ENCODE measurements at regions of chr7 and their contacts with region 1.

Region 1: GRCh38 chr7:27739909-27740448 is at the start of gene TAX1BP1:
- DNase-seq: peak; percentile 74 to 97
- H3K4me3 ChIP-seq: peak within 1 kb of the TSS; percentile 87 to 97
- H3K27ac ChIP-seq: peak within 1 kb of the TSS; percentile 99
- H3K4me1 ChIP-seq: peaks cover 5 to 20% of the 10 kb centered on the region in 2 donors
- H3K27me3 ChIP-seq: no peaks in the 10 kb centered on the region
- CTCF ChIP-seq: no peak
- total RNA-seq, gene TAX1BP1: 32.6 TPM

Region 2: GRCh38 chr7:27453702-27454405 is 286.1 kb before region 1 on chr7:
- intact Hi-C with region 1: no loop called
- DNase-seq: no peak
- H3K4me3 ChIP-seq: no peak overlapping the region
- H3K27ac ChIP-seq: no peak overlapping the region
- H3K4me1 ChIP-seq: no peaks in the 10 kb centered on the region
- H3K27me3 ChIP-seq: no peaks in the 10 kb centered on the region
- CTCF ChIP-seq: no peak

Region 3: DNA sequence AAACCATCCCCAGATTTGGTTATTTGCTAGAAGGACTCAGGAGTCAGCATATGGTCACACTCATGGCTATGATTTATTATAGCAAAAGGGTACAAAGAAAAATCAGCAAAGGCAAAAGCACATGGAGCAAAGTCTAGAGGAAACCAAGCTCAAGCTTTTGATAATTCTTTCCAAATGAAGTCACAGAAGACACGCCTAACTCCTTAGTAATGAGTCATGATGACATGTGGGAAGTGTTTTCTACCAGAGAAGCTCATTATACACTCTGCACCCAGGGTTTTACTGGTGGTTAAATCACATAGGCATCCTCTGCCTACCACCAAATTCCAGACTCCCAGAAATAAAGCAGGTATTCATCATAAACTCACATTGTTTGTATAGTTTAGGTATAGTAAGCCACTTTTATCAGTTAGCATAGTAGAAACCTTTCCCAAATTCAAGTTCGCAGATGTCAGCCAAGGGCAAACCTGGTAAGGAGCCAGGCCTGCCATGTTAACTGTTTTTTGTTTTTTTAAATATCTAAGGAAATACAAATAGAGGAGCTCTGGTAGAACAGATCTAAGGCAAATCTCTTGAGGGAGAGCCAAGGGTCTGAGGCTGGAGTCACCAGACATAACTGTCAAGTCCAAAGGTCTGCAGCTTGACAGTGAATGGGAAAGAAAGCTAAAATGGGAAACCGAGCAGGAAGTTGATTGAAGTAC is 61.9 kb before region 1 on chr7:
- intact Hi-C with region 1: loop called (anchors 5 kb)
- DNase-seq: no peak
- H3K4me3 ChIP-seq: no peak overlapping the region
- H3K27ac ChIP-seq: peak overlapping the region; percentile 73 to 86
- H3K4me1 ChIP-seq: peaks cover 0 to 8% of the 10 kb centered on the region in 2 donors
- H3K27me3 ChIP-seq: no peaks in the 10 kb centered on the region
- CTCF ChIP-seq: no peak

Region 4: DNA sequence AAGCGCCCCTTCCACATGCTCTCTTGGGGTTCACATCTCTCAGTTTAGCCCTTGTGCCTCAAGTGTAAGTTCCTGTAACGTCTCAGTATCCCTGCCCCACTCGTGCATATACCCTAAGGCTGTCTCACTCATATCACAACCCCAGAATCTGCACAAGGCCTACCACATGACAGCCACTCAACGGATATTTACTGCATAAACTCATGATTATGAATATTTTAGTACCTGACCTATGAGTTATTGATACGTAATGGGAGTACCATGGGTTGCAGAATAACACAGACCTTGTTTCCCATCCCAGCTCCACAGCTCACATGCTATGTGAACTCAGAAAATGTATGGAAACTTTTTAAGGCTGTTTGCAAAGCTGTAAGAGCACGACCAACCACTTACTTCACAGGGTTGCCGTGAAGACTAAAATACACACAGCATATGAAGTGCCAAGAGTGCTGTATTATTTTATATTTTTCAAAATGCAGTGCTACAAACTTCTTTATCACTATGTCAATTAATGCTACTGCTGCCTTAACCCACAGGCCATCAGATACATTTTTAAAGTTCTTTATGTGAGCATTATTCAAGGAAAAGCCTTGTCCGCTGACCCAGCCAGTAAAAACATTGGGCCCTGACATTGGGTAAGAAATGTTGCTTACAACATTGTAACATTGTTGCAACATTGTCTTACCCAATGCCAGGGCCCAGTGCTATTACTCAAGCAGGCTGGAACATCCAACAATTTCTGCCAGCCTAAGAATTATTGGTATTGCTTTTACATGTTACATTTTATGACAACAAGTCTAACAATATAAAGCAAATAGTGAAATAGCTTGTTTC is 343.4 kb after region 1 on chr7:
- intact Hi-C with region 1: loop called (anchors 10 kb)
- DNase-seq: peak in 1 of 2 donors; percentile 85
- H3K4me3 ChIP-seq: no peak overlapping the region
- H3K27ac ChIP-seq: peak overlapping the region in 1 of 2 donors; percentile 49
- H3K4me1 ChIP-seq: peaks cover 0 to 25% of the 10 kb centered on the region in 2 donors
- H3K27me3 ChIP-seq: no peaks in the 10 kb centered on the region
- CTCF ChIP-seq: no peak